Lower leg skin (tissue), 4 donors: ENCODE measurements at regions of chr22 and their contacts with region 1.

Region 1: GRCh38 chr22:23137905-23138561 is 3.8 kb downstream of the RSPH14 start:
- DNase-seq: no peak
- H3K4me3 ChIP-seq: no peak overlapping the region
- CTCF ChIP-seq: no peak
- POLR2A ChIP-seq: no peak

Region 2: GRCh38 chr22:23088199-23088604 is 49.8 kb before region 1 on chr22:
- intact Hi-C with region 1: loop called (anchors 10 kb)
- DNase-seq: no peak
- H3K4me3 ChIP-seq: no peak overlapping the region
- CTCF ChIP-seq: no peak
- POLR2A ChIP-seq: no peak